ENCODE measurements at regions of chr2 and their contacts with region 1.

Region 1: DNA sequence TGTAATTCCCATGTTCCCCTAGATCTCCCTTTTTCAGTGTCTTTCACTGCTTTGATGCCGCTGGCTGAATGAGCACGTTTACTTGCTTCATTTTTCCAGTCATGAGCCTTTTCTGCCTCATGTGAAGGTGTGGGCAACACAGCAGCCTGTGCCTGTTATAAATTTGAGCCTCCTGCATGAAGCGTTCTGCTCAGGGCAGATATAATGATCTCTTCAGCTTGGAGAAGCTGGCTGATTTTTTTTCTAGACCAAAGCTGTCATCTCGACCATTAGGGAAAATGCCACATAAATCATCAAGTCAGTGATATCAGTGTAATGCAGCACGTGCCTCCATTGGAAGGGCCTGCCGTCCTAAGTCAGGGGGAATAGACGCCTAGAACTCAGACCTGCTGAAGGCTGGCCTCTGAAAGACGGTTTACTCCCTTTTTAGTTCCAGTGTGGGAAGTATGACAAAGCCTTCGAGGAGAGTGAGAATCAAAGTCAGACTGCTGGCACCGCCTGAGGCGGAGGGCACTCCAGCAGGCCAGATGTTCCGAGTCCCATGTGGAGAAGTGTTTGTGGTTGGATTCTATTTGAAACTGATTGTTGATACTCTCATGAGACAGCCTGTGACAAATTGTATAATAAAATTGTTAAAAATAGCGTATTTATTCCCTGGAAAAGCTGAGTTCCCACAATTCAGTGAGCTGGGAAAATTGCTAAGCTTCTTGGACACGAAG is 196.5 kb downstream of the MYO1B start:
- DNase-seq: no peak
- ATAC-seq: no peak
- H3K4me3 ChIP-seq: no peak overlapping the region
- H3K4me3 Mint-ChIP-seq: no peak overlapping the region
- H3K27ac ChIP-seq: no peak overlapping the region
- H3K27ac Mint-ChIP-seq: no peak overlapping the region
- H3K4me1 ChIP-seq: no peaks in the 10 kb centered on the region
- H3K4me1 Mint-ChIP-seq: no peaks in the 10 kb centered on the region
- H3K27me3 ChIP-seq: peaks cover 0 to 7% of the 10 kb centered on the region in 2 experiments
- H3K27me3 Mint-ChIP-seq: peaks cover 4 to 10% of the 10 kb centered on the region in 2 donors

Region 2: GRCh38 chr2:191350826-191351225 is 90.8 kb before region 1 on chr2:
- CTCF ChIA-PET with region 1: no interaction called
- POLR2A ChIA-PET with region 1: no interaction called
- DNase-seq: no peak
- ATAC-seq: no peak
- H3K4me3 ChIP-seq: no peak overlapping the region
- H3K4me3 Mint-ChIP-seq: no peak overlapping the region
- H3K27ac ChIP-seq: no peak overlapping the region
- H3K27ac Mint-ChIP-seq: no peak overlapping the region
- H3K4me1 ChIP-seq: peaks cover 0 to 2% of the 10 kb centered on the region in 2 experiments
- H3K4me1 Mint-ChIP-seq: no peaks in the 10 kb centered on the region
- H3K27me3 ChIP-seq: no peaks in the 10 kb centered on the region
- H3K27me3 Mint-ChIP-seq: peaks cover 3 to 8% of the 10 kb centered on the region in 2 donors

Region 3: DNA sequence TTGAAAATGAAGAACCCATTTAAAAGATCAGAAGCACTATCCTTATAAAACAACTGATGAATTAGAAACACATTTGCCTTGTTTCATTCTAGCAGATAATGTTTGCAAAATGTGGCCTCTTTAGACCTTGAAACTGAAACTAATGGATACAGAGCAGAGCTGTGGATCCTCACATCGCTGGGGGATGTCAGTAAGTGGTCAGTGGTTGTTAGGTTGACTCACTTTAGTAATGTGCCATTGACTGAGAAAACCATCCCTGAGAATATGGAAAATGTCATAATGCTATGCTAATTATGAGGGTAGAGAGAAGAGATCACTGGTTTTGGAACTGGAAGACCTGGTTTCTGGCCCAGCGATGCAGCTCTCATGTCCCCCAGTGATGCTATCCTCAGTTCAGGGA is 19.7 kb before region 1 on chr2:
- CTCF ChIA-PET with region 1: interaction called in 1 of 2 experiments, 10 read pairs
- POLR2A ChIA-PET with region 1: no interaction called
- DNase-seq: no peak
- ATAC-seq: no peak
- H3K4me3 ChIP-seq: no peak overlapping the region
- H3K4me3 Mint-ChIP-seq: no peak overlapping the region
- H3K27ac ChIP-seq: no peak overlapping the region
- H3K27ac Mint-ChIP-seq: no peak overlapping the region
- H3K4me1 ChIP-seq: no peaks in the 10 kb centered on the region
- H3K4me1 Mint-ChIP-seq: no peaks in the 10 kb centered on the region
- H3K27me3 ChIP-seq: peaks cover 0 to 2% of the 10 kb centered on the region in 2 experiments
- H3K27me3 Mint-ChIP-seq: no peaks in the 10 kb centered on the region

Measured in T-cell (primary cell).